HepG2 (cell line): ENCODE measurements at regions of chr1 and their contacts with region 1.

Region 1: DNA sequence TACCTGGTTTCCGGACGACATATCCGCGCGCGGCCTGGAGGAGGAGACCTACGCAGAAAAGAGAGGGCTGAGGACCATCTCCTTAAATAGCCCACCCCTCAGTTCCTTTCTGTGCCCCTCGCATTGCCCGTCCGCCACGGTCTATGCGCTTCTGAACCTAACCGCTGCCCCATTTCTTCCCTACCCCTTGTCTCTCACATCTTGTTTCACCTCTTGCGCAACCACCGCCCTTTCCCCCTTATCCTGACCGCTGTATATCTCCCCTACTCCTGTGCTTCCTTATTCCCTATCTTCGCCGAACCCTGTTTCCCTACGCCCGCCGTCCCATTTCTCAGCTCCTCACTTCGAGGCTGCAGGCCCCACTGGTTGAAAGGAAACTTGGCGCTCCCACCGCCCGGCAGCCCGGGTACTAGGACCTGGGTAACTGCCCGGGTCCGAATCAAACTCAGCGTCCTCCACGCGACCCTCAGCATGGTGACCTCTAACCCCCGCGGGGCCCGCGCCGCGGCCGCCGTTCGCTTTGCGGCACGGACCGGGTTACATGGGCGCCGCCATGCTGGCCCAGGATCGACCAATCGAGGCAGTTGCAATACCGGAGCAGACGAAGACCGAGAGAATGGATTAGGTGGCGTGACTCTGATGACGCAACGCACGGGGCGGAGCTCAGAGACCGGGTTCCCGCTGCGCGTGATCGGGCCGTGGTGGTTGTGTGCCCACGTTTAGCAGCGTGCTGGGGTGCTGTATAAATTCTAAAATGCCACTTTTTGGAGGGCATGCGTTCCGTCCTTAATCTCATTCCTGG is at the start of gene MRPS15:
- DNase-seq: peak; percentile 90
- ATAC-seq: peak; percentile 86
- H3K4me3 ChIP-seq: peak within 1 kb of the TSS; percentile 83 to 91 (median 90)
- H3K27ac ChIP-seq: peak within 1 kb of the TSS; percentile 93
- H3K4me1 ChIP-seq: peaks cover 55% of the 10 kb centered on the region
- H3K27me3 ChIP-seq: no peaks in the 10 kb centered on the region; a peak in 1 of 5 replicates
- CTCF ChIP-seq: no peak
- EP300 ChIP-seq: peak; percentile 80 to 94
- POLR2A ChIP-seq: peak; percentile 95 to 97
- RAD21 ChIP-seq: peak; percentile 26; the same call in 1 of the 2 replicates
- total RNA-seq, gene MRPS15: 113 and 137 TPM in 2 replicates

Region 2: DNA sequence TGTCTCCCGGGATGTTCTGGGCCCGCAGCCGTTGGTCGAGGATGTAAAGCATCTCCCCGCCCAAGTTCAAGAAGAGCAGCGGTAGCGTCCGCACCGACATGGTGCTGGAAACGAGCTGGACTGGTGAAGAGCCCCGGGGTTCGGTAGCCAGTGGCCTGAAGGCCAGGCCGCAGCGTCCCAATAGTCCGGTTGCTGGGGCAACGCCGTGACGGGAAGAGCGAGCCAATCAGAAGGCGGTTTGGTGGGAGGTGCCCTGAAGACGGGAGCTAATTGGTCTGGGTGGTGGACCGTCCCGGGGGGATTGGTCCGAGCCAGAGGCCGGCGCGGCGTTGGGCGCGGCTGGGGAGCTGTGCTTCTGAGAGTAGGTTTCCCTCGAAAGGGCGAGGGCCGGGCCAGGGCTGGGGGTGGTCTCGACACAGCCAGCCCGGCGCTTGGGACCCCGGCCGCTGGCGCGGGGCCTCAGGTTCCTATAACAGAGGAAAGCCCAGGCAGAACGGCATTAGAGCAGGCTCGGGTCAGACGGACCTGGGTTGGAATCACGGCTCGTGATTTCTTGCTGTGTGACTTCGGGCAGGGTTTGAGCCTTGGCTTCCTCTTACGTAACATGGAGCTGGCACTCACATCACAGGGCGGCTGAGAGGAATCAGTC is 13.6 kb before region 1 on chr1 and contains the start of gene OSCP1:
- CTCF ChIA-PET with region 1: no interaction called
- POLR2A ChIA-PET with region 1: interaction called, 27 read pairs
- in situ Hi-C with region 1: no loop called
- intact Hi-C with region 1: no loop called
- DNase-seq: peak; percentile 79
- ATAC-seq: peak; percentile 95
- H3K4me3 ChIP-seq: peak within 1 kb of the TSS; percentile 42 to 68 (median 65); a peak in 5 of 6 replicates
- H3K27ac ChIP-seq: peak within 1 kb of the TSS; percentile 67
- H3K4me1 ChIP-seq: 0 out of 2 replicates have a peak, but pooled peaks cover 7% of the 10 kb centered on the region
- H3K27me3 ChIP-seq: no peaks in the 10 kb centered on the region
- CTCF ChIP-seq: no peak
- EP300 ChIP-seq: no peak
- POLR2A ChIP-seq: peak in 1 of 2 experiments; percentile 65; a peak in 2 of 4 replicates
- RAD21 ChIP-seq: no peak
- total RNA-seq, gene OSCP1: 0.60 and 0.86 TPM in 2 replicates

Region 3: GRCh38 chr1:36542962-36543515 is 79.0 kb after region 1 on chr1:
- CTCF ChIA-PET with region 1: no interaction called
- POLR2A ChIA-PET with region 1: no interaction called
- in situ Hi-C with region 1: no loop called
- intact Hi-C with region 1: no loop called
- DNase-seq: peak; percentile 15
- ATAC-seq: peak; percentile 92
- H3K4me3 ChIP-seq: no peak overlapping the region
- H3K27ac ChIP-seq: no peak overlapping the region
- H3K4me1 ChIP-seq: peaks cover 13% of the 10 kb centered on the region
- H3K27me3 ChIP-seq: 0 out of 5 replicates have a peak, but pooled peaks cover 0 to 3% of the 10 kb centered on the region in 2 experiments
- CTCF ChIP-seq: peak; percentile 51
- EP300 ChIP-seq: no peak
- POLR2A ChIP-seq: no peak
- RAD21 ChIP-seq: no peak

Region 4: GRCh38 chr1:36625935-36626310 is 161.9 kb after region 1 on chr1:
- CTCF ChIA-PET with region 1: no interaction called
- POLR2A ChIA-PET with region 1: no interaction called
- in situ Hi-C with region 1: no loop called
- intact Hi-C with region 1: no loop called
- DNase-seq: no peak
- ATAC-seq: no peak
- H3K4me3 ChIP-seq: no peak overlapping the region
- H3K27ac ChIP-seq: no peak overlapping the region
- H3K4me1 ChIP-seq: no peaks in the 10 kb centered on the region
- H3K27me3 ChIP-seq: no peaks in the 10 kb centered on the region; a peak in 1 of 5 replicates
- CTCF ChIP-seq: no peak
- EP300 ChIP-seq: no peak
- POLR2A ChIP-seq: no peak
- RAD21 ChIP-seq: no peak